H1 (cell line): ENCODE measurements at regions of chr5 and their contacts with region 1.

Region 1: DNA sequence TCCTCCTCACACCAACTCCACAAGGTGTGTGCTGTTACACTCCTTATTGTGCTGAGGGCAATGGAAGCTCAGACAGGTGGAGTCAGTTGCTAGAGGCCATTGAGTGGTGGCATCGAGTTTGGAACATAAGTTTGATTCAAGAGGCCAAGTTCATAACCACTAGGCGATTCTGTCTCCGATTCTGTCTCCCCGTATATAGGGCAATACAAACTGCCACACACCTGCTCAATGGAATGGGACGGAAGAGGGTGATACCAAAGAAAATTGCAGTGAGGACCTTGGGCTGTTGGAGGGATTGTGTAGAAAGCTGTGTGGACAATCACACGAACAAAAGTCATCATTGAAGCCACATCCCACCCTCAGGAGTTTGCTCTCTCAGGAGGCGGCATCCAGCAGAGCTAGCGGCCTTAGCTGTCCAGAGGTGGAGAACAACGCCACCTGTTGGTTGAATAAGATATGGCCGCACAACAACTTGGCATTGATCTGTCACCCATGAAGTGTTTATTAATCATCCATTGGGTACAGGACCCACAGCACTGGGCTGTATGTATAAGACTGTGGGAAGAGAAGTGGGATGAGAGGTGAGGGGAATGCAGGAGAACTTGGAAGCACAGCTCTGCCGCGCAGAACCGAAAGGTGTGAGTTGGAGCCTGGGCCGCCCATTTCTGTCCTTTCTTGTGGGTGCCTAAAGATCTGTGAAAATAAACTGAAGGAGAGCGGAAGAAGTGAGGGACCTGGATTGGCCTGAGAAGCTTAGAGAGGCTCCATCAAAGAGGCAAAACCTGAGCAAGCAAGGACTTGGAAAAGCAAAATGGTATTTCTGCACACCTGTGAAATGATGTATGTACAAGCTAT is 16.1 kb upstream of the NEUROG1 start:
- DNase-seq: peak in 1 of 2 experiments; percentile 82
- H3K4me3 ChIP-seq: no peak overlapping the region
- H3K27ac ChIP-seq: no peak overlapping the region
- H3K4me1 ChIP-seq: no peaks in the 10 kb centered on the region; a peak in 2 of 7 replicates
- H3K27me3 ChIP-seq: peaks cover 41 to 50% (median 49%) of the 10 kb centered on the region in 4 experiments
- CTCF ChIP-seq: peak; percentile 64 to 87 (median 85)
- EP300 ChIP-seq: no peak
- POLR2A ChIP-seq: no peak
- RAD21 ChIP-seq: peak; percentile 89 to 91

Region 2: GRCh38 chr5:135410348-135410747 is 141.5 kb before region 1 on chr5:
- CTCF ChIA-PET with region 1: no interaction called
- POLR2A ChIA-PET with region 1: no interaction called
- DNase-seq: no peak
- H3K4me3 ChIP-seq: no peak overlapping the region
- H3K27ac ChIP-seq: no peak overlapping the region
- H3K4me1 ChIP-seq: no peaks in the 10 kb centered on the region
- H3K27me3 ChIP-seq: no peaks in the 10 kb centered on the region
- CTCF ChIP-seq: no peak
- EP300 ChIP-seq: no peak
- POLR2A ChIP-seq: no peak
- RAD21 ChIP-seq: no peak

Region 3: GRCh38 chr5:135481387-135481786 is 70.4 kb before region 1 on chr5:
- CTCF ChIA-PET with region 1: interaction called, 122 read pairs
- POLR2A ChIA-PET with region 1: no interaction called
- DNase-seq: no peak
- H3K4me3 ChIP-seq: no peak overlapping the region
- H3K27ac ChIP-seq: no peak overlapping the region
- H3K4me1 ChIP-seq: peaks cover 0 to 24% (median 14%) of the 10 kb centered on the region in 4 experiments; a peak in 6 of 7 replicates
- H3K27me3 ChIP-seq: peaks cover 23 to 84% (median 76%) of the 10 kb centered on the region in 4 experiments
- CTCF ChIP-seq: no peak
- EP300 ChIP-seq: no peak
- POLR2A ChIP-seq: no peak
- RAD21 ChIP-seq: no peak

Region 4: GRCh38 chr5:135526924-135527323 is 24.9 kb before region 1 on chr5:
- CTCF ChIA-PET with region 1: interaction called, 77 read pairs
- POLR2A ChIA-PET with region 1: interaction called, 3 read pairs
- DNase-seq: no peak
- H3K4me3 ChIP-seq: no peak overlapping the region
- H3K27ac ChIP-seq: no peak overlapping the region
- H3K4me1 ChIP-seq: no peaks in the 10 kb centered on the region
- H3K27me3 ChIP-seq: peaks cover 13 to 46% (median 38%) of the 10 kb centered on the region in 4 experiments
- CTCF ChIP-seq: no peak
- EP300 ChIP-seq: no peak
- POLR2A ChIP-seq: no peak
- RAD21 ChIP-seq: no peak

Region 5: DNA sequence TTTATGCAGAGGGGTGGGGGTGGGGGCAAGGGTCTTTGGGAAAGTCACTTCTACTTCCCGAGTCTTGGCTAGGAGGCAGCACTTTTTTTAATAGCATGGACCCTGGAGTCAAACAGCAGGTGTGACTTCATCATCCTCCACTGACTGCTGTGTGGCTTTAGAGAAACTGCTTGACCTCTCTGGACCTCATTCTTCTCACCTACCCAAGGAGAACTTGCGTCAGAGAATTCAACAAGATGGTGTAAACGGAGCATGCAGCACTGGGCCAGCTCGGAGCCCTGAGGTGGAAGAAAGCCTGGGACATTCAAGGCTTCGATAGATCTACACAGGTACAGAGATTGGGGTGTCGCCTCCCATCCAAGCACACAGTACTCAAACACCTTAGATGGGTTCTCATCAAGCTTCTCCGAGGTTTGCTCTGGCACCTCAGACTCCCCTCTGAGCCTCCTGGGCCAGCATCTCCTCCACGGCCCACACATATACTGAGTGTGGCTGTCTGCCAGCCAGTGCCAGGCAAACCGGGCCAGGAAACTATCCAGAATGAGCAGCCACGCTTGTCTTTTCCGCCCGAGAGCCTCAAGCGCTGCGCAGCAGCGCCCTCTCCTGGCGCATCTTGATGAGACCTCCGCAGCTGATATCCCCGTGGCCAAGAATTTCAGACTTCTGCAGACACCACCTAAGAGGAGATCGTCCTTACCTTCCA is 278.0 kb after region 1 on chr5:
- CTCF ChIA-PET with region 1: interaction called, 134 read pairs
- POLR2A ChIA-PET with region 1: no interaction called
- DNase-seq: peak; percentile 36 to 86
- H3K4me3 ChIP-seq: no peak overlapping the region
- H3K27ac ChIP-seq: no peak overlapping the region
- H3K4me1 ChIP-seq: peaks cover 0 to 4% (median 1%) of the 10 kb centered on the region in 4 experiments; a peak in 2 of 7 replicates
- H3K27me3 ChIP-seq: peaks cover 8 to 32% (median 23%) of the 10 kb centered on the region in 4 experiments
- CTCF ChIP-seq: peak in 2 of 3 experiments; percentile 81 to 93; a peak in 3 of 4 replicates
- EP300 ChIP-seq: no peak
- POLR2A ChIP-seq: no peak
- RAD21 ChIP-seq: peak; percentile 88 to 97